ENCODE measurements at regions of chr7 and their contacts with region 1.

Region 1: GRCh38 chr7:75866489-75867389 is 12.1 kb upstream of the RHBDD2 start:
- DNase-seq: peak; percentile 47 to 72 (median 67)
- ATAC-seq: peak; percentile 97 to 98 (median 98)
- H3K4me3 ChIP-seq: no peak overlapping the region
- H3K27ac ChIP-seq: no peak overlapping the region
- H3K4me1 ChIP-seq: peaks cover 0 to 6% (median 0%) of the 10 kb centered on the region in 4 donors
- H3K27me3 ChIP-seq: no peaks in the 10 kb centered on the region
- CTCF ChIP-seq: peak; percentile 89 to 97 (median 93)
- POLR2A ChIP-seq: no peak

Region 2: DNA sequence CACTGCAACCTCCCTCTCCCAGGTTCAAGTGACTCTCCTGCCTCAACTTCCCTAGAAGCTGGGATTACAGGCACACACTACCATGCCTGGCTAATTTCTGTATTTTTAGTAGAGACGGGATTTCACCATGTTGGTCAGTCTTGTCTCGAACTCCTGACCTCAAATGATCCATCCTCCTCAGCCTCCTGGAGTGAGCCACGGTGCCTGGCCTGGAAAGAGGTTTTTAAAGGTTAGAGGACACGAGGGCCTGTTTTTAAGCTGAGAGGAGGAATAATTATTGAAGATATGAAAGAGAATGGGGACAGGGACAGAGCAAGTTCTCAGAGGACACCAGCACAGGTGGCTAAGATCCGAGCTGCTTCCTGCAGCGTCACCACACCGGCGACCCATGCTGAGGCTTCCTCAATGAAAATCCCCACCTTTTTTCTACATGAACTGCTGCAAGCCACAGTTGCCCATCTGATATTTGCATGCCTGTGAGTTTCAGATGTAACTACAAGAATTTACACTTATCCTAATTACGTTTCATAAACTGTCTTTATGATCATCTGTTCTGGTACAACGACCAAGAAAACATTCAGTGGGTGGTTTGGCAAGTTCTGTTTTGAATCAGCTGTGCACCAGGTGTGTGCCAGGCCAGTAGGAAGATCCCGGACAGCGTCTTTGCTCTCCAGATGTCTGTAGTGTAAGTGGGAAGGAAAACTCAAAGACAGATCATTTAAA is 204.0 kb before region 1 on chr7:
- intact Hi-C with region 1: no loop called
- DNase-seq: peak in 1 of 3 donors; percentile 8
- ATAC-seq: no peak
- H3K4me3 ChIP-seq: no peak overlapping the region
- H3K27ac ChIP-seq: no peak overlapping the region
- H3K4me1 ChIP-seq: no peaks in the 10 kb centered on the region
- H3K27me3 ChIP-seq: no peaks in the 10 kb centered on the region
- CTCF ChIP-seq: no peak
- POLR2A ChIP-seq: no peak

Region 3: GRCh38 chr7:75928331-75928909 is 61.7 kb after region 1 on chr7:
- intact Hi-C with region 1: no loop called
- DNase-seq: no peak
- ATAC-seq: no peak
- H3K4me3 ChIP-seq: no peak overlapping the region
- H3K27ac ChIP-seq: peak overlapping the region; percentile 81 to 100 (median 95)
- H3K4me1 ChIP-seq: peaks cover 0 to 81% (median 30%) of the 10 kb centered on the region in 4 donors
- H3K27me3 ChIP-seq: no peaks in the 10 kb centered on the region
- CTCF ChIP-seq: no peak
- POLR2A ChIP-seq: no peak

Region 4: DNA sequence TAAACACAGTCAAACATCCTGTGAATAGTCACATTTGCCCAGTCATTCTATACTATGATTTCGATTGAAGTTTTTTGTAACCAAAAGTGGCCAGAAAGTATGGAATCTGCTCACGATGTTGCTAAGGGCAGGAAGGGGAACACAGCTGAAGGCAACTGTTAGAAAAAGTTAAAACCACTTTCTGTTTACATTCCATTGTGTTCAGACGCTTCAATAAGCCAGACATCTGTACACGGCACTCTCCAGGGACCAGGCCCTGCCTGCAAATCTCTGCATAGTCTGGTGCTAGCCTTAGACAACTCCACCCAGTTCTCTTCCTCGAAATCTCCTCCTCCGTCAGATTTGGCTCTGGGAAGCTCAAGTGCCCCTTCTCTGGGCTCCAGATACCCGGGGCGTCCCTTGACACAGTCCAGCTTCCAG is 144.7 kb after region 1 on chr7:
- intact Hi-C with region 1: loop called in 1 of 2 experiments (anchors 10 kb)
- DNase-seq: no peak
- ATAC-seq: peak in 2 of 4 donors; percentile 19 to 40
- H3K4me3 ChIP-seq: no peak overlapping the region
- H3K27ac ChIP-seq: no peak overlapping the region
- H3K4me1 ChIP-seq: no peaks in the 10 kb centered on the region
- H3K27me3 ChIP-seq: no peaks in the 10 kb centered on the region
- CTCF ChIP-seq: no peak
- POLR2A ChIP-seq: no peak

Region 5: GRCh38 chr7:76020031-76020714 is 153.4 kb after region 1 on chr7:
- intact Hi-C with region 1: loop called (anchors 5 to 10 kb)
- DNase-seq: peak; percentile 71 to 81 (median 81)
- ATAC-seq: peak; percentile 96 to 98 (median 96)
- H3K4me3 ChIP-seq: no peak overlapping the region
- H3K27ac ChIP-seq: no peak overlapping the region
- H3K4me1 ChIP-seq: no peaks in the 10 kb centered on the region
- H3K27me3 ChIP-seq: no peaks in the 10 kb centered on the region
- CTCF ChIP-seq: peak; percentile 92 to 97 (median 94)
- POLR2A ChIP-seq: no peak

Region 6: DNA sequence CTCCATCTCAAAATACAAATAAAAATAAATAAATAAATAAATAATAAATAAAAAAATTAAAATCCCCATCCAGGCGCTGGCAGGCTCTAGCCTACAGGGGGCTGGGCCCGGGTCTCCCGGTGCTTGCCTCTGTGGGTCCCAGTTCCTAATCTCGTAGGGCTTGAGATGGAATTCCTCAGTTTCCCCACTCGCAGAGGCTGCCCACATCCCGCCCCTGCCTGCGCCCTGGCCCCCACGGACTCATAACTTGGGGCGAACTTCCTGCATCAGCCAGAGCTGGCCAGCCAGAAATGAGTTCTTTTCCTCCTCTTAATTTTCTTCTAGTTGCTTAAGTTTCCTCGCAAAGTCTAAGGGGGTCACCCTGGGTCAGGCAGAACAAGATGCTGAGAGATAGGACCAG is 312.9 kb after region 1 on chr7:
- intact Hi-C with region 1: no loop called
- DNase-seq: no peak
- ATAC-seq: no peak
- H3K4me3 ChIP-seq: no peak overlapping the region
- H3K27ac ChIP-seq: no peak overlapping the region
- H3K4me1 ChIP-seq: no peaks in the 10 kb centered on the region
- H3K27me3 ChIP-seq: no peaks in the 10 kb centered on the region
- CTCF ChIP-seq: no peak
- POLR2A ChIP-seq: no peak